HepG2 (cell line): ENCODE measurements at regions of chr18 and their contacts with region 1.

Region 1: GRCh38 chr18:8389391-8390340 is 219.6 kb upstream of the RAB12 start:
- DNase-seq: peak; percentile 59
- ATAC-seq: peak; percentile 93
- H3K4me3 ChIP-seq: no peak overlapping the region
- H3K27ac ChIP-seq: no peak overlapping the region
- H3K4me1 ChIP-seq: no peaks in the 10 kb centered on the region
- H3K27me3 ChIP-seq: no peaks in the 10 kb centered on the region
- CTCF ChIP-seq: peak; percentile 88
- EP300 ChIP-seq: no peak
- POLR2A ChIP-seq: no peak
- RAD21 ChIP-seq: peak; percentile 76

Region 2: GRCh38 chr18:7789856-7790552 is 599.7 kb before region 1 on chr18:
- CTCF ChIA-PET with region 1: no interaction called
- POLR2A ChIA-PET with region 1: no interaction called
- in situ Hi-C with region 1: loop called (anchors 10 kb)
- intact Hi-C with region 1: loop called (anchors 2 kb)
- DNase-seq: peak; percentile 31
- ATAC-seq: peak; percentile 68
- H3K4me3 ChIP-seq: no peak overlapping the region
- H3K27ac ChIP-seq: no peak overlapping the region
- H3K4me1 ChIP-seq: peaks cover 12% of the 10 kb centered on the region
- H3K27me3 ChIP-seq: no peaks in the 10 kb centered on the region
- CTCF ChIP-seq: peak; percentile 60
- EP300 ChIP-seq: no peak
- POLR2A ChIP-seq: no peak
- RAD21 ChIP-seq: no peak

Region 3: DNA sequence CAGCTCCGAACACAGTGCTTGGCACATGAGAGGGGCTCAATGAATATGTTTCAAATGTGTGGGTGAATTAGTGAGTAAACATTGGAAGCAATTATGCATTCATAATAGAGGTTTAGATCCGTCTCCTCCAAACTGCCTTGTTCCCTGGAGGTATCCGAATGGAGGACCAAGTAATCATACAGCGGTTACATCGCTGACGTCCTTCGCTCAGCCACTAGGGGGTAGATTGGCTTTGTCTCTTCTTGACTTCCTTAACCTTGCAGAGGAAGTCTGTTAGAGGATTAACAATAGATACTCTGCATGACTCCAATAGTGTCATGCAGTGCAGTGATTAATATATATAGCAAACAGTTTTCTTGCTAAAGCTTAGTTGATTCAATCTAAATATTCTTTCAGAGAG is 305.5 kb before region 1 on chr18:
- CTCF ChIA-PET with region 1: interaction called, 30 read pairs
- POLR2A ChIA-PET with region 1: no interaction called
- in situ Hi-C with region 1: loop called (anchors 10 kb)
- intact Hi-C with region 1: loop called (anchors 1 kb)
- DNase-seq: peak; percentile 28
- ATAC-seq: peak; percentile 89
- H3K4me3 ChIP-seq: no peak overlapping the region
- H3K27ac ChIP-seq: no peak overlapping the region
- H3K4me1 ChIP-seq: no peaks in the 10 kb centered on the region
- H3K27me3 ChIP-seq: no peaks in the 10 kb centered on the region
- CTCF ChIP-seq: peak; percentile 71
- EP300 ChIP-seq: no peak
- POLR2A ChIP-seq: no peak
- RAD21 ChIP-seq: peak; percentile 52

Region 4: DNA sequence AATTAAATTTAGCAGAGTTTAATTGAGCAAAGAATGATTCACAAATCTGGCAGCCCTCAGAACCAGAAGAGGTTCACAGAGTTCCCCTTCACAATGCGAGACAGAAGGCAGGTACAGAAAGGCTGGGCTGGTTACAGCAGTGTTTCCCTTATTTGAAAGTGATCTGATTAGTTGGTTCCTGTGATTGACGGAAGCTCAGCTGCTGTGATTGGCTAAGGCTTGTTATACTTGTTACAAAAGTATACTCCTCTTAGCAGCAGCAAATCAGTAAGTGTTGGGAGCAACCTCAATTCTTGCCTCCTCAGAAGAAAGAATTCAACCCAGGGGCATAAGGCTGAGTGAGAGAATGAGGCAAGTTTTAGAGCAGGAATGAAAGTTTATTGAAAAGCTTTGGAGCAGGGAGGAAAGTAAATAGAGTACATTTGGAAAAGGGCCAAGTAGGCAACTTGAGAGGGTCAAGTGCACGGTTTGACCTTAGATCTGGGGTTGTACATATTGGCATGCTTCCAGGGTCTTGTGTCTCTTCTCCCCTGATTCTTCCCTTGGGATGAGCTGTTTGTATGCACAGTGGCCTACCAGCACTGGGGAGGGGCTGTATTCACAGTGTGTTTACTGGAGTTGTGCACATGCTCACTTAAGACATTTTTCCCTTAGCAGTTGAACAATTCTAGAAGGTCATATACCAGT is 212.2 kb before region 1 on chr18:
- CTCF ChIA-PET with region 1: no interaction called
- POLR2A ChIA-PET with region 1: no interaction called
- in situ Hi-C with region 1: no loop called
- intact Hi-C with region 1: loop called (anchors 10 kb)
- DNase-seq: peak; percentile 72
- ATAC-seq: peak; percentile 87
- H3K4me3 ChIP-seq: no peak overlapping the region
- H3K27ac ChIP-seq: peak overlapping the region; percentile 29
- H3K4me1 ChIP-seq: peaks cover 29% of the 10 kb centered on the region
- H3K27me3 ChIP-seq: no peaks in the 10 kb centered on the region
- CTCF ChIP-seq: no peak
- EP300 ChIP-seq: peak in 1 of 2 experiments; percentile 63; a peak in 2 of 4 replicates
- POLR2A ChIP-seq: no peak
- RAD21 ChIP-seq: no peak

Region 5: DNA sequence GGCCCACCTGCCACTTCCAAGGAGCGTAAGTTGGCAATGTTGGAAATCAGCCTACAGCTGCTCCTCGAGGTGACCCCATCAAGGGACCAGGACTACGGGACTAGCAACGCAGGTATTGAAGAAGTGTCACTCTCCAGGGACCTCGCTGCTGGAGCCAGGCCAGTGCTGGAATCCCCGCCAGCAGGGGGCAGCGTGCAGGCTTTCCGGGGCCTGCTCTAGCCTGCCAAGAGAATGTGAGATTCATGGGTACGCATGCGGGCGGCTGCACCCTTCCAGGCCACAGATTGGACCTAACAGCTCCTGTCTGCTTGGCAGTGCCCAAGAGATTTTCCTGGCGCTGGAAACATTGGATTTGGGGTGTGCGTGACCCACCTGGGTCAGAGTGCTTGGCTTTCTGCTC is 36.7 kb after region 1 on chr18:
- CTCF ChIA-PET with region 1: no interaction called
- POLR2A ChIA-PET with region 1: no interaction called
- in situ Hi-C with region 1: no loop called
- intact Hi-C with region 1: no loop called
- DNase-seq: peak; percentile 24
- ATAC-seq: peak; percentile 89
- H3K4me3 ChIP-seq: no peak overlapping the region
- H3K27ac ChIP-seq: no peak overlapping the region
- H3K4me1 ChIP-seq: peaks cover 11% of the 10 kb centered on the region; the same call in 1 of the 2 replicates
- H3K27me3 ChIP-seq: peaks cover 2 to 3% of the 10 kb centered on the region in 2 experiments; a peak in 2 of 5 replicates
- CTCF ChIP-seq: peak; percentile 72
- EP300 ChIP-seq: no peak
- POLR2A ChIP-seq: no peak
- RAD21 ChIP-seq: peak; percentile 54